ENCODE measurements at regions of chr13 and their contacts with region 1.

Region 1: GRCh38 chr13:32911506-32911905 is 104.7 kb upstream of the KL start:
- DNase-seq: peak; percentile 51
- H3K4me3 ChIP-seq: no peak overlapping the region
- H3K27ac ChIP-seq: no peak overlapping the region
- H3K4me1 ChIP-seq: no peaks in the 10 kb centered on the region
- H3K27me3 ChIP-seq: peaks cover 4% of the 10 kb centered on the region
- CTCF ChIP-seq: peak; percentile 52 to 85

Region 2: GRCh38 chr13:31835932-31836331 is 1075.6 kb before region 1 on chr13:
- CTCF ChIA-PET with region 1: no interaction called
- dilution Hi-C with region 1: no loop called
- in situ Hi-C with region 1: no loop called
- intact Hi-C with region 1: no loop called
- DNase-seq: peak; percentile 64
- H3K4me3 ChIP-seq: no peak overlapping the region
- H3K27ac ChIP-seq: no peak overlapping the region
- H3K4me1 ChIP-seq: no peaks in the 10 kb centered on the region
- H3K27me3 ChIP-seq: peaks cover 2% of the 10 kb centered on the region
- CTCF ChIP-seq: no peak

Region 3: GRCh38 chr13:32310134-32310706 is 601.3 kb before region 1 on chr13:
- CTCF ChIA-PET with region 1: no interaction called
- dilution Hi-C with region 1: no loop called
- in situ Hi-C with region 1: no loop called
- intact Hi-C with region 1: no loop called
- DNase-seq: peak; percentile 37
- H3K4me3 ChIP-seq: no peak overlapping the region
- H3K27ac ChIP-seq: no peak overlapping the region
- H3K4me1 ChIP-seq: peaks cover 5% of the 10 kb centered on the region
- H3K27me3 ChIP-seq: no peaks in the 10 kb centered on the region
- CTCF ChIP-seq: peak; percentile 56 to 71

Region 4: DNA sequence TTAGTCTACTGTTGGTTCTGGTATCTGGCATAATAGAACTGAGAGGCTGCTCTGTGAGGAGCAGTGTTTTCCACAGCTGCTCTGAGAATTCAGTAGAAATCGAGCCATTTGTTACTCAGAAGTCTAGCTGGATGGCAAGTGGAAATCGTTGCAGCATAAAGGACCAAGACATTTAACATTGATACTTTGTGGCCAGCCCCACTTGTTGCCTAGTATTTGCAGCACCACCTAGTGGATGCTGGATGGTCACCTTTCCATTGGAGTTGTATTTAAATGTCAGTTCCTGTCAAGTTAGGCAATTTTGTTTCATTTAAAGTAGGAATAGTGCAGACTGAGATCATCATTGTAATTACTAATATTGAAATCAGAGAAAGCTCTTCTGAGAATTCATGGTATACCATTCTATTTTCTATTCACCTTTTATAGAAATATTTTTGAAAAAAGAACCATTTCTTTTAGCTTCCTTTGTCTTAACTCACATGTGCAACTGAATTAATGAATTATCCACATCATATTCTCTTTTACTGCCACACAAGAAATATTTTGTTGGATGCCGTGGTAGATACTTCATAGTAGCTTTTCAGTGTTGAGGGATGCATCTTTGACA is 260.7 kb before region 1 on chr13:
- CTCF ChIA-PET with region 1: no interaction called
- dilution Hi-C with region 1: no loop called
- in situ Hi-C with region 1: no loop called
- intact Hi-C with region 1: loop called (anchors 5 kb)
- DNase-seq: peak; percentile 53
- H3K4me3 ChIP-seq: no peak overlapping the region
- H3K27ac ChIP-seq: no peak overlapping the region
- H3K4me1 ChIP-seq: no peaks in the 10 kb centered on the region
- H3K27me3 ChIP-seq: no peaks in the 10 kb centered on the region
- CTCF ChIP-seq: peak; percentile 81 to 83

Region 5: GRCh38 chr13:32669030-32669646 is 242.4 kb before region 1 on chr13:
- CTCF ChIA-PET with region 1: no interaction called
- dilution Hi-C with region 1: no loop called
- in situ Hi-C with region 1: no loop called
- intact Hi-C with region 1: loop called (anchors 2 kb)
- DNase-seq: peak; percentile 12
- H3K4me3 ChIP-seq: no peak overlapping the region
- H3K27ac ChIP-seq: no peak overlapping the region
- H3K4me1 ChIP-seq: no peaks in the 10 kb centered on the region
- H3K27me3 ChIP-seq: no peaks in the 10 kb centered on the region
- CTCF ChIP-seq: peak; percentile 65 to 68

Region 6: GRCh38 chr13:32824671-32825070 is 86.8 kb before region 1 on chr13:
- CTCF ChIA-PET with region 1: no interaction called
- dilution Hi-C with region 1: no loop called
- in situ Hi-C with region 1: no loop called
- intact Hi-C with region 1: loop called (anchors 5 kb)
- DNase-seq: peak; percentile 29
- H3K4me3 ChIP-seq: no peak overlapping the region
- H3K27ac ChIP-seq: peak overlapping the region; percentile 26
- H3K4me1 ChIP-seq: peaks cover 13% of the 10 kb centered on the region
- H3K27me3 ChIP-seq: peaks cover 3% of the 10 kb centered on the region
- CTCF ChIP-seq: no peak

Region 7: GRCh38 chr13:32984846-32985544 is 73.5 kb after region 1 on chr13:
- CTCF ChIA-PET with region 1: no interaction called
- dilution Hi-C with region 1: loop called (anchors 5 kb)
- in situ Hi-C with region 1: no loop called
- intact Hi-C with region 1: no loop called
- DNase-seq: no peak
- H3K4me3 ChIP-seq: no peak overlapping the region
- H3K27ac ChIP-seq: no peak overlapping the region
- H3K4me1 ChIP-seq: no peaks in the 10 kb centered on the region
- H3K27me3 ChIP-seq: no peaks in the 10 kb centered on the region
- CTCF ChIP-seq: no peak

Measured in mammary epithelial cell (primary cell).